ENCODE measurements at regions of chr17 and their contacts with region 1.

Region 1: DNA sequence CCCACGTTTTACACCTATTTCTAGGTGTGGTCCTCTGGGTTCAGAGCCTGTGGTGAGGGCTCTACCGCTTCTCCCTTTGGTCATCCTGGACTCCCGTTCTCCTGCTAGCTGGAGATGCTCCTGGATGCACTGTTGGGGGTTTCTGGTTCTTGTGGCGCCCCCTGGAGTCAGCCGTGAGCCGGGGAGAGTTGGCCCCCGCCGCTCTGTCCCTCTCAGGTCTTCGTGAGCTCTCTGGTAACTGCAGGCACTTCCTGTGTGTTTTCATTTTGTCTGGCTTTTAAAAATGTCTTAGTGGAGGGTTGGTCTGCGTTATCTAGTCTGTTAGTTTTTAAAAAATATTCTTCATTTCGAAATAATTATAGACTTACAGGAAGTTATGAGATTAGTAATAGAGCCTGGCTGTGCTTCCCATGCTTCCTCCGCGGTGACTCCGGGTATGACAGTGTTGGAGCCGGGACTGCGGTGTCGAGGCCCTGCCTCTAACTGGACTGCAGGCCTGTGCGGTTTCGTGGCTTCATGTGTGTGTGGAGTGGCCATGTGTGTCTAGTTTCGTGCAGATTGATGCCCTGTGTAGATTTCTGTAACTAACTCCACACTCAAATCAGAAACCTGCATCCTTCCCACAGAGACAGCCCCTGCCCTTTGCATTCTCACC is 78.0 kb upstream of the ZNF750 start:
- DNase-seq: no peak
- ATAC-seq: no peak
- H3K4me3 ChIP-seq: no peak overlapping the region
- H3K27ac ChIP-seq: no peak overlapping the region
- H3K4me1 ChIP-seq: no peaks in the 10 kb centered on the region
- H3K27me3 ChIP-seq: no peaks in the 10 kb centered on the region
- CTCF ChIP-seq: peak; percentile 43

Region 2: GRCh38 chr17:82781894-82782274 is 135.9 kb before region 1 on chr17:
- intact Hi-C with region 1: loop called (anchors 1 to 2 kb)
- DNase-seq: peak; percentile 84 to 92
- ATAC-seq: peak; percentile 91 to 97 (median 94)
- H3K4me3 ChIP-seq: peak overlapping the region; percentile 13
- H3K27ac ChIP-seq: peak overlapping the region; percentile 59
- H3K4me1 ChIP-seq: peaks cover 11% of the 10 kb centered on the region
- H3K27me3 ChIP-seq: no peaks in the 10 kb centered on the region
- CTCF ChIP-seq: peak; percentile 99

Measured in psoas muscle (tissue), 8 donors.